Activated naive CD4-positive, alpha-beta T cell treated with anti-CD3 and anti-CD28 coated beads for 36 hours (primary cell): ENCODE measurements at regions of chr15 and their contacts with region 1.

Region 1: GRCh38 chr15:52179278-52180195 is 11.7 kb downstream of the GNB5 start:
- DNase-seq: peak; percentile 91
- H3K4me3 Mint-ChIP-seq: peak overlapping the region; percentile 87
- H3K27ac Mint-ChIP-seq: peak overlapping the region; percentile 92
- H3K4me1 Mint-ChIP-seq: peaks cover 19% of the 10 kb centered on the region
- H3K27me3 Mint-ChIP-seq: no peaks in the 10 kb centered on the region

Region 2: DNA sequence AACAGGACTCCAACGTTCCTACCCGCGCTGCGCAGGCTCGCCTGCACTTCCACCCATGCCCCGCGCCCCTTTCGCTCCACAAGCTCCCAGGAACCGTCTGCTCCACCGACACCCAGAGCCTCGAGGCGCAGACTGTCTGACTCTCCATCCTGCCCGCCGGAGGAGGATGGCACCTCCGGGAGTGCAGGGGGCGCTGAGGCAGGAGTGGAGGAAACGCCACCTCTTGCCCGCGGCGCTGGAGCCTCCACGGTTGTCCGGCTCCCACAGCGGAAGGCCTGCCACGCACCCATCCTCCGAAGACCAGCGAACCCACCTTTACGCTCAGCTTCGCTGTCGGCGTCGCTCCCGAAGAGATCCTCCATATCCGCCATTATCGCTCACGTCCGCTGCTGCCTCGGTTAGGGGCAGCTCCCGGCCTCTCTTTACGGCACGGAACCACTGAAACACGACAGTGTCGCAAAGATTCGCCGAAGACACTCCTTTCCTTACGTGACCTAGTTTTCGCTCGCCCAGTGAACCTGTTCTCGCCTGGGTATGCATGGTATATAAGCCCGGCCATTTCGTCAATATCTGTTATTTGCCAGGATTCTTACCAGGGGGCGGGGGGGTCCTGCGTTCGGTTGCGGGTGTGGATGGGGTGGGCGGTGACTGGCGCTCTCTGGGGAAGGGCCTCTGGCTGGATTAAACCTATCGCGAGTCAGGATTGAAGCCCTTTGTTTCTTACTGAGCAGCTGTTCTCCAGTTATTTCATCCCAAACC is 208.0 kb before region 1 on chr15 and contains the start of gene LEO1:
- CTCF ChIA-PET with region 1: no interaction called
- intact Hi-C with region 1: loop called (anchors 2 kb)
- DNase-seq: peak; percentile 95
- H3K4me3 Mint-ChIP-seq: peak within 1 kb of the TSS; percentile 90
- H3K27ac Mint-ChIP-seq: peak within 1 kb of the TSS; percentile 96
- H3K4me1 Mint-ChIP-seq: peaks cover 24% of the 10 kb centered on the region
- H3K27me3 Mint-ChIP-seq: peaks cover 2% of the 10 kb centered on the region
- total RNA-seq, gene LEO1: 21.0 to 23.8 TPM

Region 3: DNA sequence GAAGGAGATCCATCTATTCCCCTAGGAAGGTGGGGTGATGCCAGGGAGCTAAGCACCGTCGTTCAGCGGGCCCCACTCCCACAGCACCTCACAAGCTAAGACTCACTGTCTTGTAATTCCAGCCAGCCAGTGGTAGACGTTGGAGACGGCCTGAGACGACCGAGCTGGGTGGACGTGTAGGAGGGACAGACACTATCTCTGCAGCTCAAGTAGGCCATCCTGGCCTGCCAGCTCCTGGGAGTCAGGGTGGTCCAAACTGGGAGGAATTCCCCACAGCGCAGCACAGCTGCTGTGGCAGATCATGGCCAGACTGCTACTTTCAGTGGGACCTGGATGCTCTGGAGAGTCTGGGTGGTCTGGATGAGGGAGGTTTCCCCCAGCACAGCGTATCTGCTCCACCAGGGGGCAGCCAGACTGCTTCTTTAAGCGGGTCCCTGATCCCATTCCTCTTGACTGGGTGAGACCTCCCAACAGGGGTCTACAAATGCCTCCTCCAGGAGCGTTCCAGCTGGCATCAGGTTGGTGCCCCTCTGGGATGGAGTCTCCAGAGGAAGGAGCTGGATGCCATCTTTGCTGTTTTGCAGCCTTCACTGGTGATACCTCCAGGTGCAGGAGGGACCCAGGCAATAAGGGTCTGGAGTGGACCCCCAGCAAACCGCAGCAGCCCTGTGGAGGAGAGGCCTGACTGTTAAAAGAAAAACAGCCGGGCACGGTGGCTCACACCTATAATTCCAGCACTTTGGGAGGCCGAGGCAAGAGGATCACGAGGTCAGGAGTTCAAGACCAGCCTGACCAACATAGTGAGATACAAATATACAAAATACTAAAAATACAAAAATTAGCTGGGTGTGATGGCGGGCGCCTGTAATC is 16.0 kb before region 1 on chr15:
- CTCF ChIA-PET with region 1: interaction called, 10 read pairs
- intact Hi-C with region 1: loop called (anchors 1 kb)
- DNase-seq: peak; percentile 29
- H3K4me3 Mint-ChIP-seq: no peak overlapping the region
- H3K27ac Mint-ChIP-seq: no peak overlapping the region
- H3K4me1 Mint-ChIP-seq: peaks cover 28% of the 10 kb centered on the region
- H3K27me3 Mint-ChIP-seq: no peaks in the 10 kb centered on the region

Region 4: GRCh38 chr15:52208306-52208946 is 28.9 kb after region 1 on chr15:
- CTCF ChIA-PET with region 1: interaction called, 10 read pairs
- intact Hi-C with region 1: loop called (anchors 1 kb)
- DNase-seq: peak; percentile 91
- H3K4me3 Mint-ChIP-seq: no peak overlapping the region
- H3K27ac Mint-ChIP-seq: no peak overlapping the region
- H3K4me1 Mint-ChIP-seq: no peaks in the 10 kb centered on the region
- H3K27me3 Mint-ChIP-seq: no peaks in the 10 kb centered on the region

Region 5: DNA sequence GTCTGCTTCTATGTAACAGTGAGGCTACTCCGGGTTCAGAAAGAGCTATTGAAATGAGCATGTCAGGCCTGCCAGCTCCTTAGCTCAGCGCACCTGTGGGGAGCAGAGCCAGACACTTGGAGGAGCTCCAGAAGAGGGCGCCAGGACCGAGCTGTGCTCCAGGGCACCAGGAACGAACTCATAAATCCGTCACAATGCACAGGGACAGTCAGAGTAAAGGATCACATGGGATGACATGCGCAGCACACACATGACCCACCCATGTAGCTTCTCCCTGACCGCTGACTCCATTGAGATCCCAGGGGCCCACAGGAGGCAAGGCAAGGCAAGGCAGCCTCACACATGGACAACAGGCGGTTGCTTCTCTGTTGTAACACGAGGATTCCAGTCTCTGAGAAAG is 37.6 kb after region 1 on chr15:
- CTCF ChIA-PET with region 1: interaction called, 7 read pairs
- intact Hi-C with region 1: loop called (anchors 1 kb)
- DNase-seq: peak; percentile 45
- H3K4me3 Mint-ChIP-seq: no peak overlapping the region
- H3K27ac Mint-ChIP-seq: no peak overlapping the region
- H3K4me1 Mint-ChIP-seq: peaks cover 14% of the 10 kb centered on the region
- H3K27me3 Mint-ChIP-seq: no peaks in the 10 kb centered on the region

Region 6: DNA sequence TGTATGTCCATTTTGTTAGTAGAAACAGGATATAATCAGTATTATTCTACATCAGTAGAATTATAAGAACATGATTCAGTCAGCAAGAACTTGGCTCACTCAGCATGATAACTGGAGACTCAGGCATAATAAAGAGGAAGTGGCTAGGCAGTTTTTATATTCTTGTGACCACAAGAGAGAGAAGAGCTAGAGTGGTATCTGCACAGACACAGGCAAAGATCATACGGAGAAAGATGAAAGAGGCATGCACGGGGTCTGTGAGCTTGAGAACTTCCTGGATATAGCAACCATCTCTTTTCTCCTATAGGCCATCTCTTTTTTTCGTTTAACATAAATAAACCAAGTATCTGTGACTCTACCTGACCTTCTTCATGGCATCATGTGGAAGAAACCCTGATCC is 302.4 kb after region 1 on chr15:
- CTCF ChIA-PET with region 1: no interaction called
- intact Hi-C with region 1: no loop called
- DNase-seq: peak; percentile 55
- H3K4me3 Mint-ChIP-seq: no peak overlapping the region
- H3K27ac Mint-ChIP-seq: no peak overlapping the region
- H3K4me1 Mint-ChIP-seq: peaks cover 47% of the 10 kb centered on the region
- H3K27me3 Mint-ChIP-seq: no peaks in the 10 kb centered on the region

Region 7: GRCh38 chr15:52563604-52564003 is 384.1 kb after region 1 on chr15:
- CTCF ChIA-PET with region 1: no interaction called
- intact Hi-C with region 1: loop called (anchors 2 kb)
- DNase-seq: no peak
- H3K4me3 Mint-ChIP-seq: no peak overlapping the region
- H3K27ac Mint-ChIP-seq: no peak overlapping the region
- H3K4me1 Mint-ChIP-seq: peaks cover 64% of the 10 kb centered on the region
- H3K27me3 Mint-ChIP-seq: no peaks in the 10 kb centered on the region

Region 8: GRCh38 chr15:52679232-52680040 is 499.9 kb after region 1 on chr15 and contains the start of gene ATOSA:
- CTCF ChIA-PET with region 1: no interaction called
- intact Hi-C with region 1: loop called (anchors 5 kb)
- DNase-seq: peak; percentile 93
- H3K4me3 Mint-ChIP-seq: peak within 1 kb of the TSS; percentile 100
- H3K27ac Mint-ChIP-seq: peak within 1 kb of the TSS; percentile 98
- H3K4me1 Mint-ChIP-seq: peaks cover 39% of the 10 kb centered on the region
- H3K27me3 Mint-ChIP-seq: no peaks in the 10 kb centered on the region
- total RNA-seq, gene ATOSA: 19.4 to 21.7 TPM